HepG2 (cell line): ENCODE measurements at regions of chr14 and their contacts with region 1.

Region 1: GRCh38 chr14:85867450-85867849 is 337.5 kb downstream of the FLRT2 start:
- DNase-seq: no peak
- ATAC-seq: peak; percentile 36; the same call in 1 of the 3 replicates
- H3K4me3 ChIP-seq: no peak overlapping the region
- H3K27ac ChIP-seq: no peak overlapping the region
- H3K4me1 ChIP-seq: no peaks in the 10 kb centered on the region
- H3K27me3 ChIP-seq: no peaks in the 10 kb centered on the region
- CTCF ChIP-seq: 0 out of 2 replicates have a peak, but pooled peaks have one; percentile 8
- EP300 ChIP-seq: no peak
- POLR2A ChIP-seq: no peak
- RAD21 ChIP-seq: no peak

Region 2: DNA sequence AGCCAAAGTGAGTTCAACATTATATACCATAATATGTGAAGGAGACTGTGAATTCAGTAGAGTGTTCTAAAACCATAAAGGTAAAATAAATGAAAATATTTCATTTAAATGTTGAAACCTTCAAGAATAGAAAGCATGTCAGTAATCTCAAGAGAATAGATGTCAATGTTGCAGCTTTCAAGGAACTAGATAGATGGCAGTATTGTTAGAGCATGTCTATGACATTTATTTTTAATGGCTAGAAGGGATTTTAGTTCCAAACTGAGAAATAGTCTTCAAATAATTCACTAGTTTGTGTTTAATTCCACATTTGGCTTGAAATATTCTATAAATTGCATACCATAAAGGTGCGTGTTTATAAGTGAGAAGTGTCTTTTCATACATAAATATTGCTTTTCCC is 11.0 kb before region 1 on chr14:
- CTCF ChIA-PET with region 1: no interaction called
- POLR2A ChIA-PET with region 1: no interaction called
- in situ Hi-C with region 1: no loop called
- intact Hi-C with region 1: no loop called
- DNase-seq: no peak
- ATAC-seq: no peak
- H3K4me3 ChIP-seq: no peak overlapping the region
- H3K27ac ChIP-seq: no peak overlapping the region
- H3K4me1 ChIP-seq: no peaks in the 10 kb centered on the region
- H3K27me3 ChIP-seq: no peaks in the 10 kb centered on the region
- CTCF ChIP-seq: no peak
- EP300 ChIP-seq: no peak
- POLR2A ChIP-seq: no peak
- RAD21 ChIP-seq: no peak

Region 3: GRCh38 chr14:85881935-85882334 is 14.5 kb after region 1 on chr14:
- CTCF ChIA-PET with region 1: no interaction called
- POLR2A ChIA-PET with region 1: no interaction called
- in situ Hi-C with region 1: no loop called
- intact Hi-C with region 1: no loop called
- DNase-seq: no peak
- ATAC-seq: no peak
- H3K4me3 ChIP-seq: no peak overlapping the region
- H3K27ac ChIP-seq: no peak overlapping the region
- H3K4me1 ChIP-seq: no peaks in the 10 kb centered on the region
- H3K27me3 ChIP-seq: no peaks in the 10 kb centered on the region; a peak in 1 of 5 replicates
- CTCF ChIP-seq: no peak
- EP300 ChIP-seq: no peak
- POLR2A ChIP-seq: no peak
- RAD21 ChIP-seq: no peak

Region 4: DNA sequence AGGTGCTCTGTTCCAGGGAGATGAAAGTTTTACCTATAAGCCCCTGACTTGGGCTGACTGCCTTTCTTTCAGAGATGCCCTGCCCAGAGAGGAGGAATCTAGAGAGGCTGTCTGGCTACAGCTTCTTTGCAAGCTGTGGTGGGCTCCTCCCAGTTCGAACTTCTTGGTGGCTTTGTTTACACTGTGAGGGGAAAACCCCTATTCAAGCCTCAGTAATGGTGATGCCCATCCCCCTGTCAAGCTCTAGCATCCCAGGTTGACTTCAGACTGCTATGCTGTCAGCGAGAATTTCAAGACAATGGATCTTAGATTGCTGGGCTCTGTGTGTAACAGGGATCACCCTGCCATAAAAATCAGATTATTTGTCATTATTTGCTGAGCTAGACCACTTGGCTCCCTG is 40.1 kb after region 1 on chr14:
- CTCF ChIA-PET with region 1: no interaction called
- POLR2A ChIA-PET with region 1: no interaction called
- in situ Hi-C with region 1: no loop called
- intact Hi-C with region 1: no loop called
- DNase-seq: no peak
- ATAC-seq: no peak
- H3K4me3 ChIP-seq: no peak overlapping the region
- H3K27ac ChIP-seq: no peak overlapping the region
- H3K4me1 ChIP-seq: no peaks in the 10 kb centered on the region
- H3K27me3 ChIP-seq: no peaks in the 10 kb centered on the region
- CTCF ChIP-seq: no peak
- EP300 ChIP-seq: no peak
- POLR2A ChIP-seq: no peak
- RAD21 ChIP-seq: no peak

Region 5: DNA sequence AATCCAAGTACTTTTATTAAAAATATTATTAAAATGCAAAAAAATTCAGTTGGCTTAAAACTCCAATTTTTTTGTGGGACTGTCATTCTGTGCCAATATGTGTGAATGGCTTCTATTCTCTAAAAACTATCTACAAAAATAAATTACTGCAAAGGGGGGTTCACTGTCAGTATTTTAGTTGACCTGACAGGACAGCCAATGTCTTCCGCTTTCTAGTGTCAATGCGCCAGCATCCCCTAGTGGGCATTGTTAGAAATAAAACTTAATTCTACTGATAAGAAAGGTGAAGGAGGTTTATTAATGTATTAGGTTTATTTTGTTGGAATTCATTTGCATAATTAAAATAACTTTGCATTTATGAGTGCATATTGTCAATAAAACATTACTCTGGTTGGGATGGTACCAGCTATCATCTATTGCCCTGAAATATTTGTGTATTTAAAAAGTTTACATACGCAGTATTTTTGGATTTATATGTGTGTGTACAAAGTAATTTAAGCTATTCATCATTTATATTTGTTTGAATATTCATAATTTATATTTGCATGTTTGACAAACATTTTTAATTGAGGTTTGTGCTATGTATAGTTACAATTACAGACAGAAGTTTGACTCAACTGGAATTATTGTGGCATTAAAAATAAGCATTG is 189.7 kb after region 1 on chr14:
- CTCF ChIA-PET with region 1: no interaction called
- POLR2A ChIA-PET with region 1: no interaction called
- in situ Hi-C with region 1: no loop called
- intact Hi-C with region 1: loop called (anchors 2 kb)
- DNase-seq: peak; percentile 6
- ATAC-seq: no peak
- H3K4me3 ChIP-seq: no peak overlapping the region
- H3K27ac ChIP-seq: no peak overlapping the region
- H3K4me1 ChIP-seq: no peaks in the 10 kb centered on the region
- H3K27me3 ChIP-seq: no peaks in the 10 kb centered on the region
- CTCF ChIP-seq: peak; percentile 58
- EP300 ChIP-seq: no peak
- POLR2A ChIP-seq: no peak
- RAD21 ChIP-seq: no peak

Region 6: GRCh38 chr14:86143248-86143647 is 275.8 kb after region 1 on chr14:
- CTCF ChIA-PET with region 1: no interaction called
- POLR2A ChIA-PET with region 1: no interaction called
- in situ Hi-C with region 1: no loop called
- intact Hi-C with region 1: no loop called
- DNase-seq: no peak
- ATAC-seq: no peak
- H3K4me3 ChIP-seq: no peak overlapping the region
- H3K27ac ChIP-seq: no peak overlapping the region
- H3K4me1 ChIP-seq: no peaks in the 10 kb centered on the region
- H3K27me3 ChIP-seq: no peaks in the 10 kb centered on the region
- CTCF ChIP-seq: no peak
- EP300 ChIP-seq: no peak
- POLR2A ChIP-seq: no peak
- RAD21 ChIP-seq: no peak